CD14-positive monocyte (primary cell): ENCODE measurements at regions of chrX and their contacts with region 1.

Region 1: DNA sequence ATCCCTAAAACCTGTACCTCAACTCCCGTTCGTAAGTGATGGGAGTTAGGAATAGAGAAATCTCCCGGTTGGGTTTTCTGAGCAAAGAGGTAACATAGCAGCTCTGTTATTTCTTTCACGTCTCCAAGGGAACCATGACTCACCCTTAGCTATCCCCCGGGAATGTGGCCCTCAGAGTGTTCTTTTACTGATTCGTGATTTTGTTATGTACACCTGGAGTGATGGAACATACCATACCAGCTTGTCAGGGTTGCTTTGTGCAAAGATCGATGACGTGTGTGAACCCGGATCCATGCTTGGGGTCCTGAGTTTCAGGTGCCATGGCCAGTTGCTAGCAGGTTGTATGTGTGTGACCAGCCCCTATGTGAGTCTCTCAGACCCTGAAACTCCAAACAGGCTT is 52.6 kb downstream of the HPRT1 start:
- DNase-seq: no peak
- H3K4me3 ChIP-seq: no peak overlapping the region
- H3K4me3 Mint-ChIP-seq: no peak overlapping the region
- H3K27ac ChIP-seq: no peak overlapping the region
- H3K27ac Mint-ChIP-seq: peak overlapping the region in 1 of 7 donors; percentile 36
- H3K4me1 ChIP-seq: no peaks in the 10 kb centered on the region
- H3K4me1 Mint-ChIP-seq: no peaks in the 10 kb centered on the region
- H3K27me3 ChIP-seq: no peaks in the 10 kb centered on the region
- H3K27me3 Mint-ChIP-seq: peaks cover 0 to 4% (median 0%) of the 10 kb centered on the region in 3 donors
- CTCF ChIP-seq: no peak

Region 2: DNA sequence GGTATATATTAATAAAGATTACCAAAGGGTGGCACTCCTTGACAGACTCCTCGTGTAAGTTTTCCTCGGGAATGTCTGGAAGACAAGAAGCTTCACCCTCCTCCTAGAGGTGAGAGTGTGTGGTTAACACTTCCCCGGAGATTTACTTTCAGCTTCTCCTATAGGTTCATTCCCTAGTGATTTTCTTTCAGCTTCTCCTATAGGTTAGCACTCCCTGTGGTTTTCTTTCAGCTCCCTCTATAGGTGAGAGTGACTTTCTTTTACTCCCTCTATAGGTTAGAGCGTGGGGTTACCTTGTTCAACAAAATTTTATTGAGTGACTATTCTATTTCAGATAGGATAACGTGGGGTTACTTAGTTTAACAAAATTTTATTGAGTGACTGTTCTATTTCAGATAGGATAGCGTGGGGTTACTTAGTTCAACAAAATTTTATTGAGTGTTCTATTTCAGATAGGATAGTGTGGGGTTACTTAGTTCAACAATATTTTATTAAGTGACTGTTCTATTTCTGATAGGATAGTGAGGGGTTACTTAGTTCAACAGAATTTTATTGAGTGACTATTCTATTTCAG is 251.7 kb after region 1 on chrX:
- intact Hi-C with region 1: loop called in 1 of 2 experiments (anchors 10 kb)
- DNase-seq: peak in 2 of 3 donors; percentile 20 to 37
- H3K4me3 ChIP-seq: no peak overlapping the region
- H3K4me3 Mint-ChIP-seq: no peak overlapping the region
- H3K27ac ChIP-seq: no peak overlapping the region
- H3K27ac Mint-ChIP-seq: no peak overlapping the region
- H3K4me1 ChIP-seq: no peaks in the 10 kb centered on the region
- H3K4me1 Mint-ChIP-seq: no peaks in the 10 kb centered on the region
- H3K27me3 ChIP-seq: no peaks in the 10 kb centered on the region
- H3K27me3 Mint-ChIP-seq: peaks cover 0 to 5% (median 3%) of the 10 kb centered on the region in 3 donors
- CTCF ChIP-seq: peak; percentile 28